A673 (cell line): ENCODE measurements at regions of chr12 and their contacts with region 1.

Region 1: DNA sequence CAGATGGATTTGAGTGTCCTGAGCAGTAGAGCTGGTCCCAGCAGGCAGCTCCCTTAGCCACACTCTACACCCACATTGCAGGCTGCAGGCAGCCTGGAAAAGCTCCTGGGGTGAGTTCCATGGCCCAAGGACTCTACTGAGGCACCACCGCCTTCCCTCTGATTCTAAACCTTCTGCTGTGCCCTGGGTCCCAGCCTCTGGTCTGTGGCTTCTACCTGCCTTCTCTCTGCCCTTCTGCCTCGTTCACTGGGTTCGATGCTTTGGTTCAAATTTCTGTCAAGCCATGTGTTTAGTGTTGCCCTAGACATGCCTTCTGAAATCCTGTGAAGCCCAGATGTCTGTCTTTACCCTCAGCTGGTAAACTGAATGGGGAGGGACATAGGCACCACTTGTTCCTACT is 1.5 kb upstream of the FGF6 start:
- DNase-seq: no peak
- H3K4me3 ChIP-seq: no peak overlapping the region
- H3K27ac ChIP-seq: no peak overlapping the region
- H3K4me1 ChIP-seq: peaks cover 22% of the 10 kb centered on the region
- H3K27me3 ChIP-seq: no peaks in the 10 kb centered on the region
- CTCF ChIP-seq: no peak

Region 2: DNA sequence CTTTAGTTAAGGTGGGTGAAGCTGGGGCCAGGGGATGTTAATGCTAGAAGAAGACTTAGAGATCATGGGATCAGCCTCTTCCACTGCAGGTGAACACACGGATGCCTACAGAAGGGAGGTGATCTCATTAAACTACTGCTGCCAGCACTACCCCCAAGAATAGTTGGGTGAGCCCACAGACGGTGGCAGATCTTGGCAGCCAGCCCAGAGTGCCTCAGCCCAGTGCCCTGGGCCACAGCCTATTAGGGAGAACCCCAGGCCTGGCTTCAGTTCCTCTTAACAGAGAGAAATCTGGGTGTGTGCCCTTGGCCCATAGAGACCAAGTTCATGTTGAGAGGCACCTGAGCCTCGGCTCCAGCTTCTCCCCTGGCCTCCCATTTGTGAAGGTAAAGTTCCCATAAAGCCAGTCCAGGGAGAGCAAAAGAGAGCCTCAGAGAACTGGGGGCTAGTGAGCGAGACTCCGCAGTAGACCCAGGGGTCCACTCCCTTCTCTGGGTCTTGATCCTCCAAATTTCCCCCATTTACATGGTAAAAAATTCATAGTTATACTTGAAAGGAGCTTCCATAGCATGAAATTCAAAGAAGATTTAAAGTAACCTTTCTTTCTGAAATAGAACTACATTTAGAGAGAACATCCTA is 298.6 kb before region 1 on chr12:
- CTCF ChIA-PET with region 1: no interaction called
- POLR2A ChIA-PET with region 1: no interaction called
- intact Hi-C with region 1: no loop called
- DNase-seq: no peak
- H3K4me3 ChIP-seq: no peak overlapping the region
- H3K27ac ChIP-seq: no peak overlapping the region
- H3K4me1 ChIP-seq: no peaks in the 10 kb centered on the region
- H3K27me3 ChIP-seq: no peaks in the 10 kb centered on the region
- CTCF ChIP-seq: no peak

Region 3: GRCh38 chr12:4353785-4354208 is 93.4 kb before region 1 on chr12:
- CTCF ChIA-PET with region 1: no interaction called
- POLR2A ChIA-PET with region 1: interaction called, 12 read pairs
- intact Hi-C with region 1: no loop called
- DNase-seq: peak; percentile 24
- H3K4me3 ChIP-seq: no peak overlapping the region
- H3K27ac ChIP-seq: no peak overlapping the region
- H3K4me1 ChIP-seq: no peaks in the 10 kb centered on the region
- H3K27me3 ChIP-seq: no peaks in the 10 kb centered on the region
- CTCF ChIP-seq: peak; percentile 49